Natural killer cell (primary cell): ENCODE measurements at regions of chr15 and their contacts with region 1.

Region 1: DNA sequence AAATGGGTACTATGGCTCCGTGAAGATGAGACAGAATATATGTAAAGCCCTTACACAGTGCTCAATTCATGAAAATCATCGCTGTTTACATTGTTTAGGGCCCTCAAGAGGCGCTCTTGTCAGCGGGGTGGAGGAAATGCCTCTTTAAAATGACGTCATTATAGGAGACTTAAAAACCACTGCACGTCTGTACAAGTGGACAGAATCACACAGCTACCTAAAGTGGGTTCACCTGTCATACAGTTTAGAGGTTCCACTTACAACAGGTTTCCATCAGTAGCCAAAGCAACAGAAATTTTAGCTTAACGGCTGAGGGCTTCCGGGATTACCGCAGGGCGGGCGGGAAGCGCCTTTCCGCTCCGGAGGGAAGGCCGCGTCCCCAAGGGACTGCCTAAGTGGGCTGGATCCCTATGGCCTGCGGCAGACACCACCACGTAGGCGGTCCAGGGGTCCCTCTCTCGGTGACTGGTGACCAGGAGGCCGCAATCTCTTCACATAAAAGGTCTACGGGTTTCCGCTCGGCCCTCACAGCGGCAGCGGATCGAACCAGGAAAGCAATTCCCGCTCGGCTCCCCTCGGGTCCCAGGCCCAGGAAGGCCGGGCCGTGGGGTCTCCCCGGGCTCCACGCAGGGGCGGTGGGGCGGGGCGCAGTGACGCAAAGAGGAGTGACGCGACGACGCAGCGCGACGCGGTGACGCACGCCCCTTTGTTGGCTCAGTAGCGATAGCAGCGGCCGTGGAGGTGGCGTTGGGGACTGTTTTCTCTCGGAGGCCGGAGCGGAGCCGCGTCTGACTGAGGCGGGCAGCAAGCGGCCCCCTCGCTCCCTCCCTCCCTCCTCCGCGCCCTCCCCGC is at the start of gene ARIH1:
- DNase-seq: peak; percentile 98 to 99
- ATAC-seq: peak; percentile 76 to 92 (median 82)
- H3K4me3 ChIP-seq: peak within 1 kb of the TSS; percentile 88
- H3K4me3 Mint-ChIP-seq: peak within 1 kb of the TSS; percentile 92
- H3K27ac ChIP-seq: peak within 1 kb of the TSS; percentile 97
- H3K27ac Mint-ChIP-seq: peak within 1 kb of the TSS; percentile 89 to 92
- H3K4me1 ChIP-seq: peaks cover 24% of the 10 kb centered on the region
- H3K4me1 Mint-ChIP-seq: peaks cover 39% of the 10 kb centered on the region in 2 donors
- H3K27me3 ChIP-seq: no peaks in the 10 kb centered on the region
- H3K27me3 Mint-ChIP-seq: no peaks in the 10 kb centered on the region
- CTCF ChIP-seq: peak; percentile 18
- total RNA-seq, gene ARIH1: 193 to 212 (median 212) TPM

Region 2: DNA sequence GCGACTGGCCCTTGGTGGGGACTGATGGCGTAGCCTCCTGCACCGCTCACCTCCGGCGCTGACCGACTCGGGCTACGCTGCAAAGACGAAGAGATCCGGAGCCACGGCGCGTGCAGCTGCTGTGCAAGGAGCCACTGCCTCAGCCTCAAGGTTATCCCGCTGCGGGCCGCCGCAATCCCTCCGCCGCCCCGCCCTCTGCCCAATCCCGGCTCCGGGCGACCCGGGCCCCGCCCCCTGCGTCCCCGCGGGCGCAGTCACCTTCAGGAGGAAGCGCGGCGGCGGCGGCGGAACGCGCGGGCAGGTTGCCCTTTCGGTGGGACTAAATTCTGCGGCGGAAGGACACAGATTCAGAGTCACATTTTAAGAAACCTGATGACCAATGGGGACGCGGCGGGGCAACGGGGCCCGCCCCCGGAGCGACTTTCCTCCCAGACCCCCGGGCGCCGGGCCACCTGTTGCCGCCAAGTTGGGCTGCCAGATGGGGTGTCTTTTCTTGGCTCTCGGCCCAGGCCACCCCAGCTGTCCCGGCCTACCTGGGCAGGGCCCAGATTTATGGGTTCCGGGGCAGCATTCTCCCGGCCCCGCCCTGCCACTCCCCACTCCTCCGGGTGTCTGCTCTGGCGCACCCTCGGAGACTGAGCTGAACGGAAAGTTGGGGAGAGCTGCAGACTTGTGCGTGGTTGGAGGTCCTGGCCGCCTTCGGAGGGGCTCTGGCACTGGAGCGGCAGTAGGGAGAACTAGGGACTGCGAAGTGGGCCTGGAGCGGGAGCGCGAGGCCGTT is 242.6 kb before region 1 on chr15 and contains the start of gene PKM:
- intact Hi-C with region 1: loop called (anchors 10 kb)
- DNase-seq: peak; percentile 77 to 95
- ATAC-seq: peak; percentile 24 to 61 (median 58)
- H3K4me3 ChIP-seq: peak within 1 kb of the TSS; percentile 92
- H3K4me3 Mint-ChIP-seq: peak within 1 kb of the TSS; percentile 98
- H3K27ac ChIP-seq: peak within 1 kb of the TSS; percentile 80
- H3K27ac Mint-ChIP-seq: peak within 1 kb of the TSS; percentile 81 to 94
- H3K4me1 ChIP-seq: peaks cover 46% of the 10 kb centered on the region
- H3K4me1 Mint-ChIP-seq: peaks cover 39 to 52% of the 10 kb centered on the region in 2 donors
- H3K27me3 ChIP-seq: no peaks in the 10 kb centered on the region
- H3K27me3 Mint-ChIP-seq: no peaks in the 10 kb centered on the region
- CTCF ChIP-seq: no peak
- total RNA-seq, gene PKM: 121 to 180 (median 155) TPM

Region 3: DNA sequence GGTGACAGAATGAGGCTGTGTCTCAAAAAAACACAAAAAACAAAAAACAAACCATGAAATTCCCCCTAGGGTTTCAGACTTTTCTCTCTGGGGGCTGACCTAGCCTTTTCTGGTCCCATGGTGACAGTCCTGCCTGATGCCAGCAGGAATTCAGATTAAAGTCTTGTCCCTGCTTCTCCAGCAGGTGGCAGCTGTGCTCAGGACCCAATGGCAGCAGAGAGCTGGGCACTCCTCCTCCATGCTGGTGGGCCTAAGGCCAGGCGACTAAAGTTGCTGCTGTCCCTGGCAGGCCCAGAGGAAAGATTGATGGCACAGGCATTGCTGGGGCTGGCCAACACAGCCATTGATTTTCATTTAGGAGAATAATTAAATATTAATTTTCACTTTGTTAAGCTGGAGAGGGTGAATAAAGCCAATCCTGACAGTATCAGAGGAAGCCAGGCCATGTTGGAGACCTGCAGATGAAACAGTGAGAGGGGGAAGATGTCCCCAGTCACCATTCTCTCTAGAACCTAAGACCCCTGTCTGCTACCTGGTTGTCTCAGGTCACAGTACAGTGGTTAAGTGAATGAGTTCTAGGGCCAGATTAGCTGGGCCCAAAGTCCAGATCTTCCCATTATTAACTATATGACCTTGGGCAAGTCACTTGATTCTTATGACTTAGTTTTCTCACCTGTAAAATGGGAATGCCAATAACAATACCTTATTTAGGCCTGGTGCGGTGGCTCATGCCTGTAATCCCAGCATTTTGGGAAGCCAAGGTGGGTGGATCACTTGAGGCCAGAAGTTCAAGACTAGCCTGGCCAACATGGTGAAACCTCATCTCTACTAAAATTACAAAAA is 161.0 kb before region 1 on chr15:
- intact Hi-C with region 1: loop called (anchors 10 kb)
- DNase-seq: peak; percentile 53 to 75
- ATAC-seq: peak; percentile 87 to 100 (median 98)
- H3K4me3 ChIP-seq: no peak overlapping the region
- H3K4me3 Mint-ChIP-seq: no peak overlapping the region
- H3K27ac ChIP-seq: no peak overlapping the region
- H3K27ac Mint-ChIP-seq: no peak overlapping the region
- H3K4me1 ChIP-seq: no peaks in the 10 kb centered on the region
- H3K4me1 Mint-ChIP-seq: no peaks in the 10 kb centered on the region
- H3K27me3 ChIP-seq: no peaks in the 10 kb centered on the region
- H3K27me3 Mint-ChIP-seq: no peaks in the 10 kb centered on the region
- CTCF ChIP-seq: peak; percentile 74

Region 4: DNA sequence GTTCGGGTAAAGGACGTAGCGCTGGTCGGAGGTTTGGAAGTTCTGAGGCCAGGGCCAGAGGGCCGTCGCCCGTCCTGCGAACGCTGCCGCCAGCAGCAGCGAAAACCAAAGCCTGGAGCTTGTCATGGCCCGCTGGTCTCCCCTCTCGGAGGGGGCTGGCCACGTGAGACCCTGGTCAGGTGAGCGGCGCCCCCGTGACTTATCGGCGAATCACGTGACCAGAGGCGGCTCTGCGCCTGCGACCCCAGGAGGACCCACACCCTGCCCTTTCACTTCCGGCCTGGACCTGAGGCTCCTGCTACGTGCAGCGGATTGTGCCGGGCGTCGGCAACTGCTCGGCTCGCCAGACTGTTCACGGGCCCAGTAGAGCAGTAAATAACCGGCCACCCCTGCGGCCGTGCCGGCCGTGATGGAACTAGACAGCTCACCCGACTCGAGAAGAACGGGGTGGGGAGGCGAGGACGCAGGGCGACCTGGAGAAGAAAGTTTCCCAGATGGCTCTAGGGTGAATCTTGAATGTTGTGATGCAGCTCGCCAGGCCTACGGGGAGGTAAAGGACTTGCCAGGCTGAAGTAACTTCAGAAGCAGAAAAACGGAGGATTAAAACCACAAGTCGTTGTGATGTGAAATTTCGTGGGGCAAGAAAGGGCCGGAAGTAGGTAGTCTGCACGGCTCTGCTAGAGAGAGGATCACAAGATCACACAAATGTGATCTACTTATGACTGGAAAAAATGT is 97.8 kb before region 1 on chr15 and contains the start of gene HEXA:
- intact Hi-C with region 1: loop called (anchors 2 kb)
- DNase-seq: peak; percentile 96 to 99
- ATAC-seq: peak; percentile 77 to 92 (median 86)
- H3K4me3 ChIP-seq: peak within 1 kb of the TSS; percentile 90
- H3K4me3 Mint-ChIP-seq: peak within 1 kb of the TSS; percentile 98
- H3K27ac ChIP-seq: peak within 1 kb of the TSS; percentile 86
- H3K27ac Mint-ChIP-seq: peak within 1 kb of the TSS; percentile 96 to 99
- H3K4me1 ChIP-seq: peaks cover 25% of the 10 kb centered on the region
- H3K4me1 Mint-ChIP-seq: peaks cover 35 to 43% of the 10 kb centered on the region in 2 donors
- H3K27me3 ChIP-seq: no peaks in the 10 kb centered on the region
- H3K27me3 Mint-ChIP-seq: no peaks in the 10 kb centered on the region
- CTCF ChIP-seq: no peak
- total RNA-seq, gene HEXA: 154 to 173 (median 172) TPM

Region 5: DNA sequence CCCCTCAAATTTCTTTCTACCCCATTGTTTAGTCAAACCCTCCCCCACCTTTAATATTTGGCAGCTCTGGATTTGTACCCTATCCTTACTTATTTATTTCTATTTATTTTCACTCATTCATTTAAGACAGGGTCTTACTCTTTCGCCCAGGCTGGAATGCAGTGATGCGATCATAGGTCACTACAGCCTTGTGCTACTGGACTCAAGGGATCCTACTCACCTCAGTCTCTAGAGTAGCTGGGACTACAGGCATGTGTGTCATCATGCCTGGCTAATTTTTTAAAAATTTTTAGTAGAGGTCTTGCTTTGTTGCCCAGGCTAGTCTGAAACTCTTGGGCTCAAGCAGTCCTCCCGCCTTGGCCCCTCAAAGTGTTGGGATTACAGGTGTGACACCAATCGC is 35.6 kb after region 1 on chr15:
- intact Hi-C with region 1: loop called (anchors 5 kb)
- DNase-seq: no peak
- ATAC-seq: peak in 2 of 3 donors; percentile 24 to 25
- H3K4me3 ChIP-seq: no peak overlapping the region
- H3K4me3 Mint-ChIP-seq: no peak overlapping the region
- H3K27ac ChIP-seq: no peak overlapping the region
- H3K27ac Mint-ChIP-seq: peak overlapping the region in 1 of 2 donors; percentile 21
- H3K4me1 ChIP-seq: peaks cover 1% of the 10 kb centered on the region
- H3K4me1 Mint-ChIP-seq: peaks cover 59 to 62% of the 10 kb centered on the region in 2 donors
- H3K27me3 ChIP-seq: no peaks in the 10 kb centered on the region
- H3K27me3 Mint-ChIP-seq: no peaks in the 10 kb centered on the region
- CTCF ChIP-seq: no peak

Region 6: GRCh38 chr15:72685925-72686794 is 212.3 kb after region 1 on chr15 and contains the starts of genes BBS4 and HIGD2B:
- intact Hi-C with region 1: loop called (anchors 10 kb)
- DNase-seq: peak; percentile 82 to 92
- ATAC-seq: peak; percentile 95 to 97 (median 95)
- H3K4me3 ChIP-seq: peak within 1 kb of the TSS; percentile 94
- H3K4me3 Mint-ChIP-seq: peak within 1 kb of the TSS; percentile 98
- H3K27ac ChIP-seq: peak within 1 kb of the TSS; percentile 95
- H3K27ac Mint-ChIP-seq: peak within 1 kb of the TSS; percentile 95 to 96
- H3K4me1 ChIP-seq: peaks cover 17% of the 10 kb centered on the region
- H3K4me1 Mint-ChIP-seq: peaks cover 17 to 19% of the 10 kb centered on the region in 2 donors
- H3K27me3 ChIP-seq: no peaks in the 10 kb centered on the region
- H3K27me3 Mint-ChIP-seq: no peaks in the 10 kb centered on the region
- CTCF ChIP-seq: no peak
- total RNA-seq, gene BBS4: 24.7 to 37.2 (median 26.7) TPM
- total RNA-seq, gene HIGD2B: 0.88 to 1.8 (median 1.1) TPM